SK-N-SH (cell line): ENCODE measurements at regions of chr17 and their contacts with region 1.

Region 1: DNA sequence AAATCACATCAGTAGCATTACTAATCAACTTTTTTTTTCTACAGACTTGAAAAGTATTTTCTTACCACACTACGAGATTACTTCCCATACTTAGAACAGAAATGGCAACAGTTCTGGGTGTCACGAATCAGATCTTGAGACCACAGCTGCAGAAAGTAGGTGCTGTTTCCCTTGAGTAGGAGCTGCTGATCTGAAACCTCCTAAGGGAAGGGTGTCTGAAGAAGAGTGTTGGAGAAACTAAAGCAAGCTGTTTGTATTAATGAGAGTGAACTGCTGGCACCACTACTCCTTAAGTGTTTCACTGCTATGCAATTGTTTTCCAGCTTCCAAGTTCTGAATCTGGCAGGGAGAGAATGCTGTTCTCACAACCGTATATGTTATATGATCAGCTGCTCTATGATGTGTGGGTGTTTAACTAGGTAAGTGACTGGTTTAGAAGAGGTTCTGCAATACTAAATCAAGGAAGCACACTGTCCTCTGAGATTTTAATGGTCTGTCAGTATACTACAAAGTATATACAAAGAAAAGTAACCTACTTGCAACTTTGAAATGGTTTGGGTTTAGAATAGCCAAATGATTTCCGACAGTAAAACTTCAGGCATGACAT is 3.3 kb downstream of the ZNF652 start:
- DNase-seq: no peak
- H3K4me3 ChIP-seq: no peak overlapping the region
- H3K27ac ChIP-seq: no peak overlapping the region
- H3K4me1 ChIP-seq: peaks cover 17 to 18% of the 10 kb centered on the region in 2 experiments; a peak in 3 of 4 replicates
- H3K27me3 ChIP-seq: no peaks in the 10 kb centered on the region
- CTCF ChIP-seq: no peak
- EP300 ChIP-seq: no peak
- RAD21 ChIP-seq: no peak

Region 2: GRCh38 chr17:49170216-49170615 is 188.5 kb before region 1 on chr17:
- CTCF ChIA-PET with region 1: no interaction called
- POLR2A ChIA-PET with region 1: no interaction called
- DNase-seq: no peak
- H3K4me3 ChIP-seq: no peak overlapping the region
- H3K27ac ChIP-seq: no peak overlapping the region
- H3K4me1 ChIP-seq: no peaks in the 10 kb centered on the region
- H3K27me3 ChIP-seq: peaks cover 88% of the 10 kb centered on the region
- CTCF ChIP-seq: no peak
- EP300 ChIP-seq: no peak
- RAD21 ChIP-seq: no peak

Region 3: GRCh38 chr17:49343273-49343672 is 15.5 kb before region 1 on chr17:
- CTCF ChIA-PET with region 1: interaction called, 11 read pairs
- POLR2A ChIA-PET with region 1: no interaction called
- DNase-seq: no peak
- H3K4me3 ChIP-seq: no peak overlapping the region
- H3K27ac ChIP-seq: peak overlapping the region in 1 of 2 experiments; percentile 72; a peak in 2 of 4 replicates
- H3K4me1 ChIP-seq: peaks cover 0 to 25% of the 10 kb centered on the region in 2 experiments; a peak in 3 of 4 replicates
- H3K27me3 ChIP-seq: no peaks in the 10 kb centered on the region
- CTCF ChIP-seq: no peak
- EP300 ChIP-seq: peak in 1 of 2 experiments; percentile 41; a peak in 1 of 4 replicates
- RAD21 ChIP-seq: no peak

Region 4: DNA sequence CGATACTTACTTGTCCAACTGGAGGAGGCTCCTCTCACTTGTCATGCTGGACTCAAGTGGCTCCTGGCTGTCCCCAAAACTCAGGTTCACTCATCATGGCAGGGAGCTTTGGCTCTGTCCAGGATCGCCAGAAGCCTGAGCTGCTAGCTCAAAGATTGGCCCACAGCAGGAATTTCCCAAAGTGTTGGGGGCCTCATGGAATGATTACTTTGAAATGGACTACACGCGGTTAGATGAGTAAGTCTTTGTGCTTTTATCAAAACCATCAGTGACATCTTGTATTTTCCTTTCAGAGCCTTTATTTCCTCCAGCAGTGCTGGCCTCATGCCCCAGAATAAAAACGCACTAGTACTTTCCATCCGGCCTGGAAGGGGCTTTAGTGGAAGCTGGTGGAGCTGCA is 85.1 kb after region 1 on chr17:
- CTCF ChIA-PET with region 1: no interaction called
- POLR2A ChIA-PET with region 1: no interaction called
- DNase-seq: no peak
- H3K4me3 ChIP-seq: no peak overlapping the region
- H3K27ac ChIP-seq: no peak overlapping the region
- H3K4me1 ChIP-seq: peaks cover 14 to 22% of the 10 kb centered on the region in 2 experiments; a peak in 3 of 4 replicates
- H3K27me3 ChIP-seq: peaks cover 4% of the 10 kb centered on the region; the same call in 1 of the 2 replicates
- CTCF ChIP-seq: no peak
- EP300 ChIP-seq: peak in 1 of 2 experiments; percentile 80; a peak in 1 of 4 replicates
- RAD21 ChIP-seq: no peak

Region 5: DNA sequence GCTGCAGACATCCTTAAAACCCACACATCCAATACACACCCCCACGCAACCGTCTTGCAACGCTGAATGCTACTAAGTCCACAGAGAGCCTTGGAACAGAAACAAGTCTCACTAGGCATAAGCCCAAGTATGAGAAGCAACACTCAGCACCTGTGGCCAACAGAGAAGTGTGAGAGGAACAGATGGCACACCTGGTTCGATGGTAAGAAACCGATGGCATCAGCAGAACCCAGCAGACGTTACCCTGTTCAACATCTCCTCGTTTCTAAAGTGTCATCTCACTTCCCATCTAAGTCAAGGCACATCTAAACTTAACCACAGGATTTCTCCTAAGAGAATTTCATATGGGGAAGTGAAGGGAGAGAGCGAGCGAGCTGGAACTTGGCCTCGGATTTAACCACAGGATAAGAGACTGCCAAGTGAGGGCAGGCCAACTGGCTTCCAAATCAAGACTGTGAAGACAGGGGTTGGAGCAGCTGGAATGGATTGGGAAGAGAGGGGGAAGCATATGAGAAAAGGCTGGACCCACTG is 257.9 kb after region 1 on chr17:
- CTCF ChIA-PET with region 1: no interaction called
- POLR2A ChIA-PET with region 1: no interaction called
- DNase-seq: no peak
- H3K4me3 ChIP-seq: no peak overlapping the region
- H3K27ac ChIP-seq: no peak overlapping the region
- H3K4me1 ChIP-seq: no peaks in the 10 kb centered on the region
- H3K27me3 ChIP-seq: no peaks in the 10 kb centered on the region
- CTCF ChIP-seq: no peak
- EP300 ChIP-seq: no peak
- RAD21 ChIP-seq: no peak